ENCODE measurements at regions of chr6 and their contacts with region 1.

Region 1: GRCh38 chr6:27518881-27519795 is 46.2 kb upstream of the ZNF184 start:
- DNase-seq: peak; percentile 96
- ATAC-seq: peak; percentile 73
- H3K4me3 ChIP-seq: peak overlapping the region; percentile 89
- H3K27ac ChIP-seq: peak overlapping the region; percentile 31; the same call in 1 of the 2 replicates
- H3K4me1 ChIP-seq: peaks cover 5% of the 10 kb centered on the region; the same call in 1 of the 2 replicates
- H3K27me3 ChIP-seq: no peaks in the 10 kb centered on the region
- CTCF ChIP-seq: peak; percentile 88

Region 2: DNA sequence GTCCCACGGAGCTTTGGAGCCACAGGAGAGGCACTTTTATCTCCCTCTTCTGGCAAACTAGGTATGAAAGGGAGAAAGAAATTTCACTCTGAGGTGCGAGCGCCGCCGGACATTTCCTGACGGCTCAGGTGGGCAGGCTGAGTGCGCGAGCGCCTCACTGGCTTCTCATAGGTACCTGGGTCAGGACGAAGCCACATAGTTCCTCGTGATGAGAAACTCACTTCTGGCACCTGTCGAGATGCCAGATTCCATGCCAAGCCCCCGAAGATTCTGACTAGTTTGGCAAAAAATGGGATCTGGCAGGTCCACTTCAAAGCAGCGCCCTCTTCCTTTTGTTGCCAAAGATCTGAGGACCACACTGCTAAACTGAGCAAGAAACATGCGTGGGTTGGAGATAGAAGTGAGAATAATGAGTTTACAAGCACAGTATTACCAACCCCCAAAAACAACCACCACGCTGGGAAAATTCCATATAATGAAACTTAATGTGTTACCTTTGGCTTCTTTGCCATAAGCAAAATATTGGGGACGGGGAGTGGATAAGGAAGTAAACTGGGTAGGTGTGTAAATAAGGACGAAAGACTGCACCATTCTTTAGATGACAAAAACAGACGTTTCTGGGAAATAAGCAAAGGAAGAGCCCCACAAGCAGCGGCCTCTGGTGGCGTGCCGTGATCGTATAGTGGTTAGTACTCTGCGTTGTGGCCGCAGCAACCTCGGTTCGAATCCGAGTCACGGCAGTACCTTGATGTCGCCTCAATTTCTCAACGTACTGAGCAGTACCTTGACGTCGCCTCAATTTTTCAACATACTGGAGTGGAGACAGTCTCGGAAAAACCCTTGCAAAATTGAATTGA is 361.5 kb before region 1 on chr6:
- CTCF ChIA-PET with region 1: no interaction called
- POLR2A ChIA-PET with region 1: no interaction called
- intact Hi-C with region 1: loop called (anchors 2 kb)
- DNase-seq: peak; percentile 87
- ATAC-seq: peak; percentile 75
- H3K4me3 ChIP-seq: peak overlapping the region; percentile 81
- H3K27ac ChIP-seq: no peak overlapping the region
- H3K4me1 ChIP-seq: peaks cover 10% of the 10 kb centered on the region
- H3K27me3 ChIP-seq: no peaks in the 10 kb centered on the region
- CTCF ChIP-seq: peak; percentile 47; the same call in 1 of the 2 replicates

Region 3: DNA sequence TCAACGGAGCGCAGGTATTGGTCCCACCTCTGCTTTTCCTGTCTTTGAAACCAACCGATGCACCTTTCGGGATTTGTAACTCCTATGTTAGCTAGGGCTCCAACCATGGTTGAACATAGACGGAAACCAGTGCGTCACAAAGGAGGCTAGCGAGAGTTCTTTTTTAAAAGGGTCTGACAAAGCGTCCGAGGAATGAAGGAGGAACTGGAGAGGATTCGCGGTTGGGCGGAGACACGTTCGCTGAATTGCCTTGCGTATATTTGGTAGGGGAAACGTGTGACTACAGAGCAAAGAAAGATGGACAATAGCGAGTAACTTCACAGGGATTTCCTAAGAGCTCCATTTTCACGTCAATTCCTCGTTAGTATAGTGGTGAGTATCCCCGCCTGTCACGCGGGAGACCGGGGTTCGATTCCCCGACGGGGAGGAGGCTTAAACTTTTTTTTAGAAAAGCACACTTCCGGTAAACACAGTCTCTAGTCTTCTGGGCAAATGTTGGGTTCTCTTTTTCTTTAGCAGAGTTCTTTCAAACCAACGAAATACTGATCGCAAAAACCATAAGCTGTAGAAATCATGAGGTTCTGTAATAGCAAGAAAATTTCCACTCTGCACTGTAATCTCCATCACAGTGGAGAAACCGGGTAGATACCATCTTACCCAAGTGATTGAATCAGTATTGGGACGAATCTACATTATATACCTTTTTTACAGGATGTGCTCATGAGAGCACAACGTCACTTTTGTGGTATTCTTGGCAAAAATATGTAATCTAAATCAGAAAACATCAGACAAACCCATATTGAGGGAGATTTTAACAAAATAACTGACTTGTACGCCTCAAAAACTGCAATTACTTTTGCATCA is 39.6 kb before region 1 on chr6:
- CTCF ChIA-PET with region 1: no interaction called
- POLR2A ChIA-PET with region 1: no interaction called
- intact Hi-C with region 1: loop called (anchors 2 kb)
- DNase-seq: peak; percentile 89
- ATAC-seq: peak; percentile 71
- H3K4me3 ChIP-seq: peak overlapping the region; percentile 83
- H3K27ac ChIP-seq: peak overlapping the region; percentile 81
- H3K4me1 ChIP-seq: peaks cover 8% of the 10 kb centered on the region; the same call in 1 of the 2 replicates
- H3K27me3 ChIP-seq: no peaks in the 10 kb centered on the region
- CTCF ChIP-seq: no peak

Region 4: DNA sequence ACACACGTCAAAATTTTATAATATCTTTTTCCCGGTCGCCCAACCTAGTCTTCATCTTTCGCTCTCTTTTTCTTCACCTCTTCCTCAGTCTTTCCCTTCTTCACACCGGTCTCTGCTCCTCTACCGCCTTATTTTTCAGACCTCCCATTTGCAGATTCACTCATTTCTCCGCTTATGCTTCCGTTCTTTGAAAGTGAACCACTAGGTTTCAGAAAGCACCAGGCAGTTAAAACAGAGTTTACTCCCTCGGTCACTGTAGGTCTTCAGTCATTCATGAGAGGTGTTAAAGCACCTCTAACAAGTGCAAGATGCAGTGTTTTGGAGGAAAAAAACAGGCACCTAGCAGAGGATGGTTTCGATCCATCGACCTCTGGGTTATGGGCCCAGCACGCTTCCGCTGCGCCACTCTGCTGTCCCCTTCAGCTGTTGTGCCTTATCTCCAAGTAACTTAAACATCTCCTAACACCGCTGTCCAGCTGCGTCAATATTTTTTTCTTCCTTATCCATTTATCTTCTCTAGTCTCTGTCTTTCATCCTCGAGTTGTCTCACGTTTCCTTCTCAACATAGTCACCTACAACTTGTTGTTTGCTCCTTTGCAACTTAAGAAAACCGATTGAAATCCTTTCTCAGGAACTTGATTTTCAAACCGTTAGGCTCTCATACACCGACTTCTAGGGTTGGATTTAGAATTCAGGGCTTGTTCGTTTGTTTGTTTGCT is 73.5 kb after region 1 on chr6:
- CTCF ChIA-PET with region 1: no interaction called
- POLR2A ChIA-PET with region 1: no interaction called
- intact Hi-C with region 1: loop called (anchors 2 kb)
- DNase-seq: peak; percentile 76
- ATAC-seq: peak; percentile 96
- H3K4me3 ChIP-seq: peak overlapping the region; percentile 34; the same call in 1 of the 2 replicates
- H3K27ac ChIP-seq: no peak overlapping the region
- H3K4me1 ChIP-seq: no peaks in the 10 kb centered on the region
- H3K27me3 ChIP-seq: no peaks in the 10 kb centered on the region
- CTCF ChIP-seq: no peak

Region 5: DNA sequence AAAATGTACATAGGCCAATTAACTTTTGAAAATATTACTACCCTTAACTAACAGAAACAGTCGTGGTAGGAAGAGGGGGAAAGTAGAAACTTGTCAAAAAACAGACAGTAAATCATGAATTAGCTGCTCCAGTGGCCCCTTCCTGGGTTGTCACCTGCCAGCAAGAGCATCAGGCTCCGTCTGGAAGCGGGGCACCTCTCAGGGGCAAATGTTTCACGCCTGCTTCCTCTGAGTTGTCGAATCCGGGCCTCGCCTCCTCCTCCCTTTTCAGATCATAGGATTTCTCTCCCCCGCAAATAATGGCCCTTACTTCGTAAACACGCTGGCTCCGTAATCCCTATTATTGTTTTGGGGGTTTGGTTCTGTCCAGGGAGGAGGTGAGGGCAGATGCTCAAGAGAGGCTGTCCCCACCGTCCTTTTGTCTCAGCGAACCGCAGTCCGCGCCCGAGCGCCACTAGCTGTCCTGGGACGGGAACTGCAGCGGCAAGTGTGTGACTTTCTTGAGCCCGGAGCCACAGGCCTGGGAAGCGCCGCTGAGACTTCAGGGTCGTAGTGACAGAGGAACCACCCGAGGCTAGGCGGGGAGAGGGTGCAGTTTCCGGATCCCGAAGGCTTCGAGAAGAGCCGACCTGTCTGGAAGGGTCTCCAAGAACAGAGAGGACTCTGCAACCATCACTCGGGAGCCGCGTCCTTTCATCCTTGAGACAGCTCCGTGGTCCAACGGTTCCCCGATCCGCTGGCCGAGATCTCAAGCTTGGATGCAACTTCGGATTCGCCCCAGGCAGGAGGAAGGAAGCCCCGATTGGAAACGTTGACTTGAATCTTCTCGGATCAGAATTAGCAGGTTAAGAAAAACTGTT is 168.2 kb after region 1 on chr6:
- CTCF ChIA-PET with region 1: interaction called, 6 read pairs
- POLR2A ChIA-PET with region 1: no interaction called
- intact Hi-C with region 1: loop called (anchors 1 kb)
- DNase-seq: peak; percentile 86
- ATAC-seq: peak; percentile 78
- H3K4me3 ChIP-seq: peak overlapping the region; percentile 83
- H3K27ac ChIP-seq: 0 out of 2 replicates have a peak overlapping the region, but pooled peaks have one; percentile 7
- H3K4me1 ChIP-seq: no peaks in the 10 kb centered on the region
- H3K27me3 ChIP-seq: no peaks in the 10 kb centered on the region
- CTCF ChIP-seq: peak; percentile 90

Region 6: DNA sequence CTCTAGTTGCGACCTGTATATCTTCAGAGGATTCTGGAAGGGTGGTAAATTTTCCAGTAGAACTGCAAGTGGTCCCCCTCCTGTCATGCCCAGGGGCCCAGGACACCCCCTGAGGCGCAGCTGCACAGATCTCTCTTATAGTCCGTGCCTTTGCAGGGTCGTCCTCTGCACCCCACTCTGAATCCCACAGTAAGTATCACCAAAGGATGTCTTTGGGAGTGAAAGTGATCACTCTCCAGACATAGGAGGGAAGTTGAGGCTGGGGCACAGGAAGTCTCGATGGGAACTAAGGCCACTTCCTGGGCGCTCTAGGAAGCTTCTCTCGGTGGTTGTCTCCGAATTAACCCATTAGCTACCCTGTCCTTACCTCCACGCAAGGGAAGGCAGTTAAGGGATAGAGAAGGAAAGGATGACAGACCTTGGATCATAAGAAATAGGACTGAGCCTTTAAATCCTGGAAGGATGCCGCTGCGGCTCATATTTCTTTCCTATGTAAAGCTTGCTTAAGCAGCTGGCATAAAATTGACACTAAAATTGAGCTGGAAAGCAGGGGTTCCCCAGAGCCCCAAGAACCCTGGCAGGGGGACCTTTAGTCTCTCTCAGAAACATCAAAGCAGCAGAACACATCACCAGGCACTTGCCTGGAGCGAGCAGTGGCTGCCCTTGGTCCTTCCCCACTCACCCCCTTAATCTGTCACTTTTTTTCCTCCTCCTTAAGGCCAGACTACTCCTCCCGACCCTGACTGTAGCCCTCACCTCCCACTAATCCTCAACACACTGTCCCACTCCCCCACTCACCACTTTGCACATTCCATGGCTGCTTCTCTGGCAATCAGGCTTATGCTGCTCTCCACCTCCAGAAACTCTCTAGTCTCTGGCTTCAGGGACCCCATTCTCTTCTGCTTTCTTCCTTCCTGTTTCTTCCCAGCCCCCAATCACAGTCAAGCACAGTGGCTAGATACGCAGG is 733.2 kb after region 1 on chr6 and contains the start of gene ZKSCAN4:
- CTCF ChIA-PET with region 1: no interaction called
- POLR2A ChIA-PET with region 1: no interaction called
- intact Hi-C with region 1: no loop called
- DNase-seq: peak; percentile 93
- ATAC-seq: peak; percentile 89
- H3K4me3 ChIP-seq: peak within 1 kb of the TSS; percentile 93
- H3K27ac ChIP-seq: 0 out of 2 replicates have a peak within 1 kb of the TSS, but pooled peaks have one; percentile 4
- H3K4me1 ChIP-seq: peaks cover 12% of the 10 kb centered on the region
- H3K27me3 ChIP-seq: no peaks in the 10 kb centered on the region
- CTCF ChIP-seq: no peak
- total RNA-seq, gene ZKSCAN4: 2.3 and 3.7 TPM in 2 replicates

Region 7: DNA sequence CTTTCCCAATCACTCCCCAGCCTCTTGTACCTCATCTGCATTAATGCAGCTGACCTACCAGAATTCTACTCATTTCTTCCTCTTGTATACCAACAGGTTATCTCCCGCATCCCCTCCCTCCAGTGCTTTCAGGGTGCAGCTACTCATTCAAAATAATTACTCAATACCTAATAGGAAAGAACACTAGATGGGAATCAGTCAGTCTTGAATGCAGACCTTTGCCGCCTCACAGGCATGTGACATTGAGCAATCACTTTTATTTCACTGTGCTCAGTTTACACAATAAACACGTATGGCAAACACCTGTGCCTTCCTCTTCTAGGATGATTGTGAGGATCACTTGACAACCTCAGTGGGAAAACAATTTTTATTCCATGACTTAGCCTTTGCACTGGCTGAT is 803.5 kb after region 1 on chr6:
- CTCF ChIA-PET with region 1: no interaction called
- POLR2A ChIA-PET with region 1: no interaction called
- intact Hi-C with region 1: no loop called
- DNase-seq: no peak
- ATAC-seq: no peak
- H3K4me3 ChIP-seq: no peak overlapping the region
- H3K27ac ChIP-seq: no peak overlapping the region
- H3K4me1 ChIP-seq: no peaks in the 10 kb centered on the region
- H3K27me3 ChIP-seq: no peaks in the 10 kb centered on the region
- CTCF ChIP-seq: no peak